ENCODE measurements at regions of chr1 and their contacts with region 1.

Region 1: GRCh38 chr1:223556414-223557129 is 108.9 kb downstream of the CAPN8 start:
- DNase-seq: peak; percentile 75 to 78 (median 76)
- ATAC-seq: peak; percentile 99
- H3K4me3 ChIP-seq: no peak overlapping the region
- H3K27ac ChIP-seq: no peak overlapping the region
- H3K4me1 ChIP-seq: no peaks in the 10 kb centered on the region
- H3K27me3 ChIP-seq: peaks cover 6 to 25% of the 10 kb centered on the region in 2 experiments; a peak in 4 of 5 replicates
- CTCF ChIP-seq: peak; percentile 91 to 96 (median 95)
- EP300 ChIP-seq: no peak
- POLR2A ChIP-seq: no peak
- RAD21 ChIP-seq: peak; percentile 81 to 93

Region 2: GRCh38 chr1:223611936-223612335 is 55.4 kb after region 1 on chr1:
- CTCF ChIA-PET with region 1: no interaction called
- POLR2A ChIA-PET with region 1: interaction called, 15 read pairs
- in situ Hi-C with region 1: loop called (anchors 10 kb)
- intact Hi-C with region 1: no loop called
- DNase-seq: no peak
- ATAC-seq: no peak
- H3K4me3 ChIP-seq: no peak overlapping the region
- H3K27ac ChIP-seq: no peak overlapping the region
- H3K4me1 ChIP-seq: no peaks in the 10 kb centered on the region
- H3K27me3 ChIP-seq: peaks cover 9 to 25% of the 10 kb centered on the region in 2 experiments
- CTCF ChIP-seq: no peak
- EP300 ChIP-seq: no peak
- POLR2A ChIP-seq: no peak
- RAD21 ChIP-seq: no peak

Region 3: DNA sequence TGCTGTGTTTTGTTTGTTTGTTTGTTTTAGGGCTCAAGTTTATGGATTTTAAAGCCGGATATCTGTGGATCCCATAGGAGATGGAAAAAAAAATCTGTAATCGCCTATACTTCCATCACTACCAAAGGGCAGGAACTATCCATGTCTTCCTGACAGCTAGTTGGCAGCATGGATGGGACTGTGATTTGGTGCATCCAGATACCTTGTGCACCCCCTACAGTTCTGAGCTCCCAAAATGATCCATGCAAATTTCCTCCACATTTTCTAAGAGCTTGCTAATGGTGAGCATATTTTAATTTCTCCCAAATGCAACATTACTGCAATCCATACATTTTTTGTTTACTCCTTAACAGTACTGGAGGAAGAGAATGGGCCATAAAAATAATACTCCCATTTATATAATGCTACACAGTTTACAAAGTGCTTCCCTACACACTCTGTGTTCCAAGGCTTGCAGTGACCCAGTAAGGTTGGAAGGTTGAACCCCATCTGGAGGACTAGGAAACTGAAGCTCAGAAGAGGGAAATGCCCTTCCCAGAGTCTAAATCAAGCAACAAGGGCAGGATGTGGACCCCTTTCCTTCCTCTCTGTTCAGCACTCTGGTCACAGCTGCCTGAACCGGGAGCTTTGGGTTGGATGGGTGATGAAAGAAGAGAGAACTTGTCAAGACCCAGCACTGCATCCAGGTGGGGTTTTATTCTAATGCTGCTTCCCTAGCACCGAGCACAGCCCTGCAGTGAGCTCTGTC is 60.9 kb after region 1 on chr1:
- CTCF ChIA-PET with region 1: no interaction called
- POLR2A ChIA-PET with region 1: interaction called, 15 read pairs
- in situ Hi-C with region 1: loop called (anchors 10 kb)
- intact Hi-C with region 1: no loop called
- DNase-seq: no peak
- ATAC-seq: no peak
- H3K4me3 ChIP-seq: no peak overlapping the region
- H3K27ac ChIP-seq: no peak overlapping the region
- H3K4me1 ChIP-seq: no peaks in the 10 kb centered on the region; a peak in 1 of 5 replicates
- H3K27me3 ChIP-seq: peaks cover 39 to 73% of the 10 kb centered on the region in 2 experiments
- CTCF ChIP-seq: peak in 1 of 3 experiments; percentile 14; a peak in 1 of 6 replicates
- EP300 ChIP-seq: no peak
- POLR2A ChIP-seq: no peak
- RAD21 ChIP-seq: no peak; a peak in 1 of 4 replicates

Region 4: GRCh38 chr1:223670458-223671168 is 114.0 kb after region 1 on chr1:
- CTCF ChIA-PET with region 1: no interaction called
- POLR2A ChIA-PET with region 1: no interaction called
- in situ Hi-C with region 1: loop called (anchors 10 kb)
- intact Hi-C with region 1: no loop called
- DNase-seq: peak; percentile 62 to 67 (median 65)
- ATAC-seq: peak; percentile 97
- H3K4me3 ChIP-seq: no peak overlapping the region
- H3K27ac ChIP-seq: no peak overlapping the region
- H3K4me1 ChIP-seq: no peaks in the 10 kb centered on the region
- H3K27me3 ChIP-seq: peaks cover 0 to 31% of the 10 kb centered on the region in 2 experiments; a peak in 3 of 5 replicates
- CTCF ChIP-seq: peak; percentile 77 to 85 (median 80)
- EP300 ChIP-seq: no peak
- POLR2A ChIP-seq: no peak
- RAD21 ChIP-seq: peak; percentile 39 to 74

Region 5: DNA sequence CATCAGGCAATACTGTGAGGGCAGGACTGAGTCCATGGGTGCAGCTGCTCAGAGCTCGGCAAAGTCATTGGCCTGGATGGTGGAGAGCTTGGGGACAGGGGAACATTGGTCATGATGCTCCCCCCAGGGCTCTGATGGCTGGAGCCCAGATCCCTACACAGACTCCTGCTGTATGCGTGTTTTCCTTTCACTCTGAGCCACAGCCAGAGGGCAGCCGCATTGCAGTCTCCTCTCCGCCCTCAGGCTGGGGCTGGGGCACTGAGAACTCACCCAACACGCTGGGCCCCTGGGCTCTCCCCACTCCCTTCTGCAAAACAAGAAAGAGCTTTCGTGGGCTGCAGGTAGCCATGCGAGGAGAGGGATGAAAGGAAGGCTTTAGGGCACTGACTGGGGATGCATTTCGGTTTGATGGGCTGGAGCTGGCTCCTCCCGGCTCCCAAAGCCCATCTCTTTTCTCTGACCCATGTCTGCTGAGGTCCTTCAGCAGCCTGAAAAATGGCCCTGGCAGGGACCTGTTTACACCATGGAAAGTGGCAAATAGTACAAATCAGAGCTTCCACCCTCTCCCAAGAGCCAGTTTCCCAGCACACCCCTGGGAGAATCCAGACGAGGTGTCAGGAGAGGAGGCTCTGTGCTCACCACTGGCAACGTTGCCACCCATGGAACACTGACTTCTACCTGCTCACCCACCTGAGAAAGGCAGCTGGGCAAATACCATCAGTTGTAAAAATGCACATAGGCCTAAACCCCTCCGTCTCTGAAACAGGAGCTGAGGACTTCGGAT is 199.6 kb after region 1 on chr1:
- CTCF ChIA-PET with region 1: no interaction called
- POLR2A ChIA-PET with region 1: no interaction called
- in situ Hi-C with region 1: loop called (anchors 10 kb)
- intact Hi-C with region 1: no loop called
- DNase-seq: no peak
- ATAC-seq: no peak; the same call in 2 of the 3 replicates
- H3K4me3 ChIP-seq: no peak overlapping the region
- H3K27ac ChIP-seq: no peak overlapping the region
- H3K4me1 ChIP-seq: no peaks in the 10 kb centered on the region; a peak in 2 of 5 replicates
- H3K27me3 ChIP-seq: no peaks in the 10 kb centered on the region
- CTCF ChIP-seq: 0 out of 6 replicates have a peak, but pooled peaks of 1 of the 3 experiments have one; percentile 2
- EP300 ChIP-seq: no peak
- POLR2A ChIP-seq: no peak
- RAD21 ChIP-seq: no peak

Region 6: GRCh38 chr1:224052772-224053171 is 496.2 kb after region 1 on chr1:
- CTCF ChIA-PET with region 1: interaction called, 8 read pairs
- POLR2A ChIA-PET with region 1: no interaction called
- in situ Hi-C with region 1: loop called (anchors 10 kb)
- intact Hi-C with region 1: no loop called
- DNase-seq: no peak
- ATAC-seq: no peak
- H3K4me3 ChIP-seq: no peak overlapping the region
- H3K27ac ChIP-seq: no peak overlapping the region
- H3K4me1 ChIP-seq: no peaks in the 10 kb centered on the region; a peak in 2 of 5 replicates
- H3K27me3 ChIP-seq: no peaks in the 10 kb centered on the region
- CTCF ChIP-seq: no peak
- EP300 ChIP-seq: no peak
- POLR2A ChIP-seq: no peak
- RAD21 ChIP-seq: no peak